Ovary (tissue), 10 donors: ENCODE measurements at regions of chr15 and their contacts with region 1.

Region 1: GRCh38 chr15:66851226-66852071 is 149.4 kb downstream of the SMAD6 start:
- DNase-seq: peak; percentile 89 to 95 (median 92)
- H3K4me3 ChIP-seq: no peak overlapping the region
- H3K27ac ChIP-seq: peak overlapping the region in 1 of 2 donors; percentile 50
- H3K4me1 ChIP-seq: peaks cover 12% of the 10 kb centered on the region
- H3K27me3 ChIP-seq: no peaks in the 10 kb centered on the region
- CTCF ChIP-seq: peak; percentile 98
- EP300 ChIP-seq: no peak
- POLR2A ChIP-seq: no peak

Region 2: GRCh38 chr15:66515901-66516322 is 335.5 kb before region 1 on chr15:
- intact Hi-C with region 1: loop called in 1 of 4 experiments (anchors 10 kb)
- DNase-seq: no peak
- H3K4me3 ChIP-seq: no peak overlapping the region
- H3K27ac ChIP-seq: no peak overlapping the region
- H3K4me1 ChIP-seq: no peaks in the 10 kb centered on the region
- H3K27me3 ChIP-seq: no peaks in the 10 kb centered on the region
- CTCF ChIP-seq: no peak
- EP300 ChIP-seq: no peak
- POLR2A ChIP-seq: no peak

Region 3: GRCh38 chr15:66619151-66619903 is 232.1 kb before region 1 on chr15:
- intact Hi-C with region 1: loop called (anchors 2 to 5 kb)
- DNase-seq: peak; percentile 72 to 86 (median 83)
- H3K4me3 ChIP-seq: no peak overlapping the region
- H3K27ac ChIP-seq: no peak overlapping the region
- H3K4me1 ChIP-seq: peaks cover 11% of the 10 kb centered on the region
- H3K27me3 ChIP-seq: no peaks in the 10 kb centered on the region
- CTCF ChIP-seq: peak; percentile 83 to 90 (median 85)
- EP300 ChIP-seq: no peak
- POLR2A ChIP-seq: no peak

Region 4: GRCh38 chr15:66707310-66708082 is 144.0 kb before region 1 on chr15:
- intact Hi-C with region 1: loop called (anchors 2 to 10 kb)
- DNase-seq: peak; percentile 51 to 72 (median 57)
- H3K4me3 ChIP-seq: peak overlapping the region; percentile 15
- H3K27ac ChIP-seq: peak overlapping the region in 1 of 2 donors; percentile 44
- H3K4me1 ChIP-seq: peaks cover 25% of the 10 kb centered on the region
- H3K27me3 ChIP-seq: no peaks in the 10 kb centered on the region
- CTCF ChIP-seq: peak in 1 of 3 donors; percentile 11
- EP300 ChIP-seq: no peak
- POLR2A ChIP-seq: no peak

Region 5: DNA sequence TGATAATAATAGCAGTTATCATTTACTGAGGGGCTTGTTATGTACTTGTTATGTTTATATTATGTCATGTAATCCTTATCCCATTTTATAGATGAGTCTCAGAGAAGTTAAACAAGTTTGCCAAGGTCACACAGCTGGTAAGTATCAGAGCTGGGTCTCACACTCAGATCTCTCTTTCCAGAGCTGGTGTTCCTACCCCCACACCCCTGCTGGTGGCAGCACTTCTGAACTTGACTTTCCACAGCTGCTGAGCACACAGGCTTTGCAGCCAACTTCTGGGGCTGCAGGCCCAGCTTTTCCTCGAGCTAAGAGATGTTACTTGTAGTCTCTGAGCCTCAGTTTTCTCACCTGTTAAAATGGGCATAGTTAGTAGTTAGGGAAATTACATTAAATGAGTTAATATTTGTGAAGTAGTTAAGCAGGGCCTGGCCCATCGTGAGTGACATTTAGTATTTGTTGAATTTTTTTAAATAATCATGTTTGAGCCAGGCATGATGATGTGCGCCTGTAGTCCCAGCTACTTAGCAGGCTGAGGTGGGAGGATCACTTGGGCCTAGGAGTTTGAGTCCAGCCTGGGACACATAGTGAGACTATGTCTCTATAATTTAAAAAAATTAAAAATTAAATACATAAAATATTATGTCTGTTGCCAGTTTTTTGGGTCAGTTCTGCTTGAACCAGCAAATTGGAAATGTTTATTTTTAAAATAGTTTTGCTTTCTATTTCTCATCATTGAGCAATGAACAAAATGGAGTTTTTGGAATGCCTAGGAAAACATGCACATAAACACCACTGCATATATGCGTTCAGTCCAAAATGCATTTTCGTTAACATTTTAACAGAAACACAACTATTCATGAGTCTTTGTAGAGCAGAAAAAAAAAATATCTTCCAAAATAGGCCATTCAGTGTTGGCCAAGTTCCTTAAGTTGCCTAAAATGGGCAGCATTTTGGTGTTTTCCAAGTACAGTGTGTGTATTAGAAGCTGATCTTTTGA is 62.1 kb before region 1 on chr15:
- intact Hi-C with region 1: loop called in 3 of 4 experiments (anchors 5 kb)
- DNase-seq: peak; percentile 67 to 81 (median 76)
- H3K4me3 ChIP-seq: no peak overlapping the region
- H3K27ac ChIP-seq: peak overlapping the region in 1 of 2 donors; percentile 41
- H3K4me1 ChIP-seq: peaks cover 12% of the 10 kb centered on the region
- H3K27me3 ChIP-seq: no peaks in the 10 kb centered on the region
- CTCF ChIP-seq: peak in 2 of 3 donors; percentile 20 to 48
- EP300 ChIP-seq: no peak
- POLR2A ChIP-seq: no peak